SK-N-SH (cell line): ENCODE measurements at regions of chr18 and their contacts with region 1.

Region 1: DNA sequence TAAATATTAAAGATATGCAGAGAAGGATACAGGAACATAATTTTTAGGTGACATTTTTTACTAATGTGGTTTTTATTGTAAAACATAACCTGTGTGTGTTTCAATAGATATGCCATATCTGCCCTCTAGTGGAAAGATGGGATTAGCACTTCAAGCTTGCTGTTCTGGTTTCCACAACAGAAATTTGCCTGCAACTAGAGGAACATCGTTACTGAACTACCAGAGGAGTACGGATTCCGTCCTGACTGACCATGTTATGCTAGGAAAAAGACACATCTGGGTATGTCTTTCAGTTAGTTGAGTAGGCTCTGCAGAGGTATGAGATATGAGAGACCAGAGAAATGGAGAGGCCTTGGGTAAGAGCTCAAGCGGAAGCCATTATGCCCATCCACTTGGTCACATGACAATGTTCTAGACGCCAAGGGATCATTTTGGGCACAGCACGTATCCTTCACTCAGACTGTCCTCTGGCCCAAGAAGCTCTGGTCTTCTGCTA is 104.9 kb downstream of the MBD2 start:
- DNase-seq: peak; percentile 30
- H3K4me3 ChIP-seq: no peak overlapping the region
- H3K27ac ChIP-seq: no peak overlapping the region
- H3K4me1 ChIP-seq: peaks cover 0 to 3% of the 10 kb centered on the region in 2 experiments; a peak in 1 of 4 replicates
- H3K27me3 ChIP-seq: no peaks in the 10 kb centered on the region
- CTCF ChIP-seq: peak; percentile 91
- EP300 ChIP-seq: no peak
- RAD21 ChIP-seq: peak; percentile 88

Region 2: GRCh38 chr18:53567929-53568574 is 551.5 kb before region 1 on chr18:
- CTCF ChIA-PET with region 1: interaction called, 36 read pairs
- POLR2A ChIA-PET with region 1: no interaction called
- DNase-seq: peak; percentile 39
- H3K4me3 ChIP-seq: no peak overlapping the region
- H3K27ac ChIP-seq: no peak overlapping the region
- H3K4me1 ChIP-seq: no peaks in the 10 kb centered on the region
- H3K27me3 ChIP-seq: no peaks in the 10 kb centered on the region
- CTCF ChIP-seq: peak; percentile 66
- EP300 ChIP-seq: no peak
- RAD21 ChIP-seq: peak; percentile 66

Region 3: GRCh38 chr18:53687002-53687401 is 432.6 kb before region 1 on chr18:
- CTCF ChIA-PET with region 1: interaction called, 10 read pairs
- POLR2A ChIA-PET with region 1: no interaction called
- DNase-seq: no peak
- H3K4me3 ChIP-seq: no peak overlapping the region
- H3K27ac ChIP-seq: no peak overlapping the region
- H3K4me1 ChIP-seq: no peaks in the 10 kb centered on the region
- H3K27me3 ChIP-seq: no peaks in the 10 kb centered on the region
- CTCF ChIP-seq: no peak
- EP300 ChIP-seq: no peak
- RAD21 ChIP-seq: peak; percentile 17; the same call in 1 of the 2 replicates